AG04450 (cell line): ENCODE measurements at regions of chr12 and their contacts with region 1.

Region 1: GRCh38 chr12:74791365-74791764 is 253.7 kb downstream of the ATXN7L3B start:
- DNase-seq: no peak
- H3K4me3 ChIP-seq: no peak overlapping the region
- H3K27ac ChIP-seq: no peak overlapping the region
- H3K27me3 ChIP-seq: no peaks in the 10 kb centered on the region
- CTCF ChIP-seq: no peak

Region 2: GRCh38 chr12:74646831-74647230 is 144.5 kb before region 1 on chr12:
- CTCF ChIA-PET with region 1: no interaction called
- POLR2A ChIA-PET with region 1: no interaction called
- DNase-seq: no peak
- H3K4me3 ChIP-seq: no peak overlapping the region
- H3K27ac ChIP-seq: no peak overlapping the region
- H3K27me3 ChIP-seq: no peaks in the 10 kb centered on the region
- CTCF ChIP-seq: no peak

Region 3: DNA sequence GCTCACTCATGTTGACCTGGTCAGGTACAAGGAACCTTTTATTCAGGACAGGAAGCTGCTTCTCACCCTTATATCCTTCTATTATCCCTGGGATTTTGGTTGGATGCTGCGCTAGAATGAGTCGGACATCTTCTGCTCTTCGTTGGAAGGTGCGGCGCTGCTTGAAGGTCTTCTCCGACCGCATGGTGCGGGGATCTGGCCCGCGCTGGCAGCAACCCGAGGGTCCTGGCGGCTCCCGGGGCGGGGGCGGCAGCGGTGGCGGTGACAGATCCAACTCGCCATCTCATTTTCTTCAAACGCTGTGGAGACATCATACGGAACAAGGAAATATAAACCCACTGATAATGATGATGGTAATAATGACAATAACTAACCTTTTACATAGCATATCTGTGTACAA is 127.4 kb before region 1 on chr12:
- CTCF ChIA-PET with region 1: no interaction called
- POLR2A ChIA-PET with region 1: no interaction called
- DNase-seq: no peak
- H3K4me3 ChIP-seq: no peak overlapping the region
- H3K27ac ChIP-seq: no peak overlapping the region
- H3K27me3 ChIP-seq: no peaks in the 10 kb centered on the region
- CTCF ChIP-seq: no peak

Region 4: GRCh38 chr12:74770552-74770951 is 20.8 kb before region 1 on chr12:
- CTCF ChIA-PET with region 1: no interaction called
- POLR2A ChIA-PET with region 1: no interaction called
- DNase-seq: no peak
- H3K4me3 ChIP-seq: no peak overlapping the region
- H3K27ac ChIP-seq: no peak overlapping the region
- H3K27me3 ChIP-seq: no peaks in the 10 kb centered on the region
- CTCF ChIP-seq: no peak

Region 5: GRCh38 chr12:74801625-74802024 is 10.3 kb after region 1 on chr12:
- CTCF ChIA-PET with region 1: interaction called, 14 read pairs
- POLR2A ChIA-PET with region 1: no interaction called
- DNase-seq: no peak
- H3K4me3 ChIP-seq: no peak overlapping the region
- H3K27ac ChIP-seq: no peak overlapping the region
- H3K27me3 ChIP-seq: no peaks in the 10 kb centered on the region
- CTCF ChIP-seq: no peak